H1 (cell line): ENCODE measurements at regions of chr3 and their contacts with region 1.

Region 1: GRCh38 chr3:102229062-102229655 is 205.7 kb upstream of the ZPLD1 start:
- DNase-seq: peak; percentile 60 to 86
- H3K4me3 ChIP-seq: no peak overlapping the region
- H3K27ac ChIP-seq: no peak overlapping the region
- H3K4me1 ChIP-seq: peaks cover 0 to 4% (median 0%) of the 10 kb centered on the region in 4 experiments; a peak in 1 of 7 replicates
- H3K27me3 ChIP-seq: no peaks in the 10 kb centered on the region
- CTCF ChIP-seq: peak; percentile 71 to 92 (median 90)
- EP300 ChIP-seq: no peak
- POLR2A ChIP-seq: no peak
- RAD21 ChIP-seq: peak; percentile 97

Region 2: GRCh38 chr3:101809178-101810021 is 419.8 kb before region 1 on chr3:
- CTCF ChIA-PET with region 1: interaction called, 174 read pairs
- POLR2A ChIA-PET with region 1: no interaction called
- DNase-seq: no peak
- H3K4me3 ChIP-seq: no peak overlapping the region
- H3K27ac ChIP-seq: no peak overlapping the region
- H3K4me1 ChIP-seq: no peaks in the 10 kb centered on the region
- H3K27me3 ChIP-seq: no peaks in the 10 kb centered on the region
- CTCF ChIP-seq: peak in 2 of 3 experiments; percentile 44 to 59; a peak in 2 of 4 replicates
- EP300 ChIP-seq: no peak
- POLR2A ChIP-seq: no peak
- RAD21 ChIP-seq: peak; percentile 75 to 82

Region 3: DNA sequence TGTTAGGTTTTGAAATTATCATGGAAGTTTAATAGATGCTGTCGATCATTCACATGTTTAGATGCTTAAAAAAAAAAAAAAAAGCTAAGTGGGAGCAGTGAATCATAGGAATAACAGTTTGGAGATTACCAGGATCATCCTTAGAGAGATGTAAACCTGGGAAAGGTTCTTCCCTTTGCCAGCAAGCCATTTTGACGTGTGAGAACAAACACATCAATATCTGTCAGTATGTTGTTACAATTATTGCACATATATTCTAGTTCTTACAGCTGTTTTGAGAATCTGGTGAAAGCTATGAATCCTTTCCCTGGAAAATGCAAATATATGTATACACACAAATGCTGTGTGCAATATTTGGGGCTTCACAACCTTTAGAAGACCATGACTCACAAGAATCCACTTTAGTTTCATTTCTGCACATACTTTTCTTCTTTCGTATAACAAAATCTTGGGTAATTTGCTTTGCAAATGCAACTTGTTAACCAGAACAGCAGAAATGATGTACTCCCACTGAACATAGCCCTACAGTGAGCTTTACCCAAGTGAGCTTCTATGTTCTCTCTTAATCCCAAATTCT is 367.9 kb before region 1 on chr3:
- CTCF ChIA-PET with region 1: interaction called, 13 read pairs
- POLR2A ChIA-PET with region 1: no interaction called
- DNase-seq: no peak
- H3K4me3 ChIP-seq: no peak overlapping the region
- H3K27ac ChIP-seq: no peak overlapping the region
- H3K4me1 ChIP-seq: no peaks in the 10 kb centered on the region
- H3K27me3 ChIP-seq: peaks cover 0 to 1% (median 0%) of the 10 kb centered on the region in 4 experiments; a peak in 1 of 7 replicates
- CTCF ChIP-seq: no peak
- EP300 ChIP-seq: no peak
- POLR2A ChIP-seq: no peak
- RAD21 ChIP-seq: no peak

Region 4: DNA sequence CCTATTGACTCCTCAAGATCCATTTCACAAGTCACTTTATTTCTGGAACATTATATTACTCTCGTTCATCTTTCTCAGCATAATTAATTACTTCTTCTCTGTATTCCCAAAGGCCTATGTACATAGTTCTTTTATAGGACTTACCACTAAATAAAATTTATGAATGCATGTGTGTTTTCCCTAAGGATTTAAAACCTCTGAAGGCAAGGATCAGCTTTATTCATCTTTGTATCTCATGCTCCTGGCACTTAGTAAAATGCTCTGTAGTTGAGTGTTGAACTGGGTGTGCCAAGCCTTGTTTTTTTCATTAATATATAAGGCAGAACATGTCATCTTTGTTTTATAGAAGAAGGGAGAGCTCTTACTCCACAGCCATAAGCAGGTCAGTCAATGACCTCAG is 11.6 kb after region 1 on chr3:
- CTCF ChIA-PET with region 1: interaction called, 27 read pairs
- POLR2A ChIA-PET with region 1: no interaction called
- DNase-seq: no peak
- H3K4me3 ChIP-seq: no peak overlapping the region
- H3K27ac ChIP-seq: no peak overlapping the region
- H3K4me1 ChIP-seq: peaks cover 2 to 9% (median 8%) of the 10 kb centered on the region in 4 experiments; a peak in 4 of 7 replicates
- H3K27me3 ChIP-seq: no peaks in the 10 kb centered on the region
- CTCF ChIP-seq: no peak
- EP300 ChIP-seq: no peak
- POLR2A ChIP-seq: no peak
- RAD21 ChIP-seq: no peak

Region 5: GRCh38 chr3:102529452-102529851 is 300.3 kb after region 1 on chr3:
- CTCF ChIA-PET with region 1: interaction called, 99 read pairs
- POLR2A ChIA-PET with region 1: interaction called, 3 read pairs
- DNase-seq: peak in 1 of 2 experiments; percentile 7
- H3K4me3 ChIP-seq: no peak overlapping the region
- H3K27ac ChIP-seq: no peak overlapping the region
- H3K4me1 ChIP-seq: no peaks in the 10 kb centered on the region
- H3K27me3 ChIP-seq: no peaks in the 10 kb centered on the region
- CTCF ChIP-seq: peak; percentile 32 to 78 (median 68)
- EP300 ChIP-seq: no peak
- POLR2A ChIP-seq: no peak
- RAD21 ChIP-seq: peak; percentile 90 to 91

Region 6: DNA sequence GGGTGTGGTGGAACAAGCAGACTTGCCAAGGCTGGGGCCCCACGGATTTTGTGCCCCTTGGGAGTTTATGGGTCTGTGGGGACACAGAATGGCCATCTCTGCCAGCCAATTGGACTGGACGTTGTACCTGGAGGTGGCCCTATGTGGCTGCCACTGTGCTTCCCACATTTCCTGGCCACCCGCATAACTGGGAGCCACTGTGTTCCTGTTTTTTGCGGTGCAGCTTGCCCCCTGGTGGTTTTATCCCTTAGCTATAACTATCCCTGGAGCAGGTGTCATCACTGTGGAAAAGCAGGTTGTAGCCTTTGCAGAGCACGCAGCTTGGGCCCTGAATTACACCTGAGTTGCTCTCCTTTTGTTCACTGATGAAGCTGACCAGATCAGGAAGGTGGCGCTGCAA is 511.9 kb after region 1 on chr3:
- CTCF ChIA-PET with region 1: interaction called, 13 read pairs
- POLR2A ChIA-PET with region 1: no interaction called
- DNase-seq: no peak
- H3K4me3 ChIP-seq: no peak overlapping the region
- H3K27ac ChIP-seq: no peak overlapping the region
- H3K4me1 ChIP-seq: no peaks in the 10 kb centered on the region
- H3K27me3 ChIP-seq: no peaks in the 10 kb centered on the region
- CTCF ChIP-seq: peak; percentile 14 to 56 (median 53)
- EP300 ChIP-seq: no peak
- POLR2A ChIP-seq: no peak
- RAD21 ChIP-seq: peak; percentile 59 to 75